Endothelial cell of umbilical vein (primary cell): ENCODE measurements at regions of chr1 and their contacts with region 1.

Region 1: DNA sequence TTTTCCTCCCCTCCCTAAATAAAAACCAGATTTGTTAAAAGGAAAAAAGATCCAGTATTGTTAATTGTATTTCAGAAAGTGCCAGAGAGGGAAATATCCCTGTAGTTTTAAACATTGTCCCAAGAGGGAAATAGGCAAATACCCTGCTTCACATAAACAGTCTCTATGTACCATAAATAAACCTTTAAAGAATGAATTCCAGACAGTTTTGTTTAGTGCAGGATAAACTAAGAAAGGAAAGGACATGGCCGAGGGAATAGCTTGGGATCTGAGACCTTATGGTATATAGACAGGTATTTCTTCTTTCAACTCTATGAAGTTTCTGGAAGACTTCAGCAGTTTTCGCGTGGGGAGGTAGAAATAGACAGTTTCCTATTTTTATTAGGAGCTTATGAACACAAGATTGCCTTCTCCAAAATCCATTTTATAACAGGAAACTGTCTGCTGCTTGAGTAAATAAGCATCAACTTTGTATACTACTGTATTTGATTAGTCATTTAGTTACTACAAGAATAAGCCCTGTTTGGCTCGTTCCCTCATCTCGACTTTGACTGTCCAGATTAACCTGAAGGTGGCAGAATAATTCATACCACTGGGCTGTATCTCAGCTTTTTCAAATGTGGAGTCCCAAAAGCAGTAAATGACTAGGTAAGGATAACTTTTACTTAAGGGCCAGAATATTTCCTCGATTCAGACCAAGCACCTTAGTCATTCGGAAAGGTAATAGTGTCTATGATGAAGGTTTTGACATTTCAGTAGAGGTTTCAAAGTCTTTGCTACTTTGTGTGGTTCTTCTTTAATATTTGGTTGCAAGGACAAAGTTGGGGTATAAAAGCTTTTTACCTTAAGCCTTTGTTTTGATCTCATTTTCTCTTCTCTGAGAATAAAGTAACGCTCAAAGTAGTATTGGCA is 177.5 kb downstream of the VPS13D start:
- DNase-seq: peak; percentile 91
- H3K4me3 ChIP-seq: no peak overlapping the region
- H3K27ac ChIP-seq: no peak overlapping the region
- H3K4me1 ChIP-seq: peaks cover 33% of the 10 kb centered on the region
- H3K27me3 ChIP-seq: no peaks in the 10 kb centered on the region
- CTCF ChIP-seq: peak; percentile 23 to 24
- POLR2A ChIP-seq: no peak

Region 2: DNA sequence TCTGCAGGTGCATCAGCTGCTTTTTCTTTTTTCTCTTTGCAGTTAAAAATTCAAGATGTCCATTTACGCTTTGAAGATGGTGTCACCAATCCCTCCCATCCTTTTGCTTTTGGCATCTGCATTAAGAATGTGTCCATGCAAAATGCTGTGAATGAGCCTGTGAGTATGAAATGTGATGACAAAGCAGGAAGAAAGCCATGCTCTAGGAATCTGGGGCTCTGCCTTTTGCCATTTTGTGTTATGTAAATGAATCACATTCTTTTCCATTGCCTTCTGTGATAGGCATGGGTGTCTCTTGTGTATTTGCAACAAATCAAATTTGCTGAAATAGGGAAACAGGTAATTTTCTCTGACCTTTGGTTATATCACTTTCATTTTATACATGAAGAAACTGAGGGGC is 158.1 kb before region 1 on chr1:
- CTCF ChIA-PET with region 1: no interaction called
- POLR2A ChIA-PET with region 1: no interaction called
- dilution Hi-C with region 1: no loop called
- intact Hi-C with region 1: no loop called
- DNase-seq: no peak
- H3K4me3 ChIP-seq: no peak overlapping the region
- H3K27ac ChIP-seq: no peak overlapping the region
- H3K4me1 ChIP-seq: no peaks in the 10 kb centered on the region
- H3K27me3 ChIP-seq: no peaks in the 10 kb centered on the region
- CTCF ChIP-seq: no peak
- POLR2A ChIP-seq: no peak

Region 3: DNA sequence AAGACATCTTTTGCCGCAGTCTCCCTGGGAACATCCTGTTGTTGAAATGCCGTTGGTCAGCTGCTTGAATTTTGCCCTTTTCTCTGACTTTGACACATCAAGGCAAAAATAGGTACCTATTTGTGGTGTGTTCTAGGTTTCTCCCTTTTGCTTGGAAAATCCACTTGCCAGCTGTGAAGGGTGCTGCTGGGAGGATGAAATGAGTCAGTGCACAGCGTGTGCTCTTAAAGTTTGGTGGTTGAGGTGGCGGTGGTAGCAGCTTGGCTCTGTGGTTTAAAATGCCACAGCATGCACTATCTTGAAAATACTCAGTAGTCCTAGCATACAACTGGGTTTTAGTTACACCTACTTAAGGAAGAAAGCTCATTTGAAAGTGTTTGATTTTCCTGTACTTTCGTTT is 26.9 kb after region 1 on chr1:
- CTCF ChIA-PET with region 1: interaction called, 36 read pairs
- POLR2A ChIA-PET with region 1: no interaction called
- dilution Hi-C with region 1: no loop called
- intact Hi-C with region 1: loop called (anchors 1 kb)
- DNase-seq: peak; percentile 88
- H3K4me3 ChIP-seq: peak overlapping the region in 1 of 3 experiments; percentile 46
- H3K27ac ChIP-seq: peak overlapping the region; percentile 88
- H3K4me1 ChIP-seq: peaks cover 55% of the 10 kb centered on the region
- H3K27me3 ChIP-seq: no peaks in the 10 kb centered on the region
- CTCF ChIP-seq: no peak
- POLR2A ChIP-seq: no peak

Region 4: DNA sequence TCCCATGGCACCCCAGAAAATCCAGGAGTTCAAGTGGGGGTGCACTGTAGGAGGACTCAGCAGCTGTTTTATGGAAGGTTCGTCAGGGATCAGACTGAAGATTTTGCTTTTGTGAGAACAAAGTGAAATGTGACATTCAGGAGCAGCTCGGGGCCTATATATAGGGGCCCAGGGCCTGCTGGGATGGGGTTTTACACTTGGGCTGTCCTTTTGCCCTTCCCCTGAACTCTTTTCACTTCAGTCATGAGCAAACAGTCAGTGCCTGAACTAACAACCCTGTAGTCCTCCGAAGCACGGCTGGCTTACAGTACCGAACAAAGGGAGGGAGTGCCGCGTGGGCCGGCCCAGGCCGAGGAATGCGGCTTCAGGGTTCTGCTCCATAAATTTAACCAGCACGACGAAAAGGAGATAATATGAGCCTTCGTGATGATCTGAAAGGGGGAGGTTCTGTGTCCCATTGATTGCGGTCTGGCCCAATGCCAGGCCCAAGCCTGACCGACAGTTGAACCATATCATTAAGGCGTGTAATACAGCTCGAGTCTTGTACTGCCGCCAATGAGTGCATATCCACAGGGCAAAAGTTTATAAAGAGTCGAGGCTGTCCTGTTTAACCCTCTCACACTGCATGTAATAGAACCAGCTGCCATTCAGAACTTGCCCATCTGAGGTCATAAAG is 70.8 kb after region 1 on chr1:
- CTCF ChIA-PET with region 1: interaction called, 7 read pairs
- POLR2A ChIA-PET with region 1: no interaction called
- dilution Hi-C with region 1: no loop called
- intact Hi-C with region 1: loop called (anchors 1 kb)
- DNase-seq: peak; percentile 96
- H3K4me3 ChIP-seq: no peak overlapping the region
- H3K27ac ChIP-seq: peak overlapping the region; percentile 66
- H3K4me1 ChIP-seq: peaks cover 61% of the 10 kb centered on the region
- H3K27me3 ChIP-seq: no peaks in the 10 kb centered on the region
- CTCF ChIP-seq: no peak
- POLR2A ChIP-seq: no peak

Region 5: DNA sequence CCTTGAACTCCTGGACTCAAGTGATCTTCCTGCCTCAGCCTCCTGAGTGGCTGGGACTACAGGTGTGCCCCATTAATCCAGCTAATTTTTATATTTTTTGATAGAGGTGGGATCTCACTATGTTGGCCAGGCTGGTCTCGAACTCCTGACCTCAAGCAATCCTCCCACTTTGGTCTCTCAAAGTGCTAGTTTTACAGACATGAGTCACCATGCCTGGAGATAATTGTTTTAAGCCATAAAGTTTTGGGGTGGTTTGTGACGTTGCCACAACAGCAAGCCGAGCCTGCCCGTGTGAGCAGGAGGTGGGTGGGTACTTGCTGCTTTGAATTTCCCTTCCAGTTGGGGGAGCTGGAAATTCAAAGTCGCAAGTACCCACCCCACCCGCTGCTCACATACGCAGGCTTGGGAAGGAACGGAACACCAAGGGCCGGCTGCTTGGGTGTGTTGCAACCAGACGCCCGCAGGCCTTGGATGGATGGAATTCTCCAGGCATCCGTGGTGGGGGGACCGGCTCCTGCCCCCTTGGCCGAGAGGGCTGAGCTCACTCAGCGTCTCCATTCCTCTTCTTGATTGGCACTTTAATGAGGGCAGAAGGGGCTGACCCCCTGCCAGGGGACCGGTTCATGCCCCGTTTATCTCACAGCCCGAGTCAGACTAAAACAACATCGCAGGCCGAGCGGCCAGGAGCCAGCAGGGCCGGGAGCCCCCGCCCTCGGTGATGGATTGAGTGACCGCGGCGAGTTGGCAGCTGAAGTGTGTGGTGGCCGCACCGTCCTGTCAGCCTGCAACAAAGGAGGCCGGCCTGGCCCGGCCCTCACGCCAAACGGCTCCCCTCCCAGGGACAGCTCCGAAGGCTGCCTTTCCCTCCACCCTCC is 132.6 kb after region 1 on chr1:
- CTCF ChIA-PET with region 1: interaction called, 4 read pairs
- POLR2A ChIA-PET with region 1: no interaction called
- dilution Hi-C with region 1: no loop called
- intact Hi-C with region 1: loop called (anchors 2 kb)
- DNase-seq: peak; percentile 70
- H3K4me3 ChIP-seq: no peak overlapping the region
- H3K27ac ChIP-seq: no peak overlapping the region
- H3K4me1 ChIP-seq: peaks cover 21% of the 10 kb centered on the region
- H3K27me3 ChIP-seq: no peaks in the 10 kb centered on the region
- CTCF ChIP-seq: no peak
- POLR2A ChIP-seq: no peak

Region 6: GRCh38 chr1:12604114-12604874 is 197.0 kb after region 1 on chr1:
- CTCF ChIA-PET with region 1: interaction called, 6 read pairs
- POLR2A ChIA-PET with region 1: no interaction called
- dilution Hi-C with region 1: no loop called
- intact Hi-C with region 1: loop called (anchors 1 kb)
- DNase-seq: peak; percentile 99
- H3K4me3 ChIP-seq: peak overlapping the region in 1 of 3 experiments; percentile 15
- H3K27ac ChIP-seq: peak overlapping the region; percentile 95
- H3K4me1 ChIP-seq: peaks cover 38% of the 10 kb centered on the region
- H3K27me3 ChIP-seq: no peaks in the 10 kb centered on the region
- CTCF ChIP-seq: no peak
- POLR2A ChIP-seq: peak; percentile 38